ENCODE measurements at regions of chr17 and their contacts with region 1.

Region 1: GRCh38 chr17:51260125-51260880 is at the start of gene UTP18:
- DNase-seq: peak; percentile 97
- H3K4me3 Mint-ChIP-seq: peak within 1 kb of the TSS; percentile 83
- H3K27ac Mint-ChIP-seq: peak within 1 kb of the TSS; percentile 98
- H3K4me1 Mint-ChIP-seq: peaks cover 63% of the 10 kb centered on the region
- H3K27me3 Mint-ChIP-seq: no peaks in the 10 kb centered on the region
- total RNA-seq, gene UTP18: 65.5 to 68.5 TPM

Region 2: GRCh38 chr17:51120739-51121617 is 139.3 kb before region 1 on chr17 and contains the start of gene SPAG9:
- CTCF ChIA-PET with region 1: no interaction called
- POLR2A ChIA-PET with region 1: no interaction called
- intact Hi-C with region 1: loop called (anchors 1 kb)
- DNase-seq: peak; percentile 94
- H3K4me3 Mint-ChIP-seq: peak within 1 kb of the TSS; percentile 94
- H3K27ac Mint-ChIP-seq: peak within 1 kb of the TSS; percentile 98
- H3K4me1 Mint-ChIP-seq: peaks cover 43% of the 10 kb centered on the region
- H3K27me3 Mint-ChIP-seq: no peaks in the 10 kb centered on the region
- total RNA-seq, gene SPAG9: 58.0 to 58.7 TPM

Region 3: GRCh38 chr17:51166197-51166986 is 93.9 kb before region 1 on chr17 and contains the start of gene NME2:
- CTCF ChIA-PET with region 1: interaction called, 4 read pairs
- POLR2A ChIA-PET with region 1: interaction called, 4 read pairs
- intact Hi-C with region 1: loop called (anchors 2 kb)
- DNase-seq: peak; percentile 77
- H3K4me3 Mint-ChIP-seq: peak within 1 kb of the TSS; percentile 82
- H3K27ac Mint-ChIP-seq: peak within 1 kb of the TSS; percentile 89
- H3K4me1 Mint-ChIP-seq: peaks cover 29% of the 10 kb centered on the region
- H3K27me3 Mint-ChIP-seq: no peaks in the 10 kb centered on the region
- total RNA-seq, gene NME2: 790 to 814 TPM

Region 4: DNA sequence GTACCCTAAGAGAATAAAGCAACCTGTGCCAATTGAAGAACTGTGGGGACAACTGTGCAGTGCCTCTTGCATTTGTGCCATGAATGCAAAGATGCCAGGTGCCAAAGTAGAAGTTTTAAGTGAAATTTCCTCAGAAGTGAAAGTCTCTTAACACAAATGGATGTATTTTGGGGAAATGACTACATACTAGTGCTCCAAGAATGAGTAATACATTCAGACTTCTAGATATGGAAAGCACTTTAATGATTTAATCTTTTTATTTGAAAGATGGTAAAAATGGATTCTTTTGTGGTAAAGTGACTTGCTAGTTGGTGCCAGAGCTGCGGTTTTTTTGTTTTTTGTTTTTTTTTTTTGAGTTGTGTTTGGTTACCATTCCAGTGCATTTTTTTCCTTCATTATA is 15.1 kb after region 1 on chr17:
- CTCF ChIA-PET with region 1: interaction called, 3 read pairs
- POLR2A ChIA-PET with region 1: interaction called, 3 read pairs
- intact Hi-C with region 1: loop called (anchors 2 kb)
- DNase-seq: no peak
- H3K4me3 Mint-ChIP-seq: no peak overlapping the region
- H3K27ac Mint-ChIP-seq: no peak overlapping the region
- H3K4me1 Mint-ChIP-seq: peaks cover 34% of the 10 kb centered on the region
- H3K27me3 Mint-ChIP-seq: no peaks in the 10 kb centered on the region

Region 5: DNA sequence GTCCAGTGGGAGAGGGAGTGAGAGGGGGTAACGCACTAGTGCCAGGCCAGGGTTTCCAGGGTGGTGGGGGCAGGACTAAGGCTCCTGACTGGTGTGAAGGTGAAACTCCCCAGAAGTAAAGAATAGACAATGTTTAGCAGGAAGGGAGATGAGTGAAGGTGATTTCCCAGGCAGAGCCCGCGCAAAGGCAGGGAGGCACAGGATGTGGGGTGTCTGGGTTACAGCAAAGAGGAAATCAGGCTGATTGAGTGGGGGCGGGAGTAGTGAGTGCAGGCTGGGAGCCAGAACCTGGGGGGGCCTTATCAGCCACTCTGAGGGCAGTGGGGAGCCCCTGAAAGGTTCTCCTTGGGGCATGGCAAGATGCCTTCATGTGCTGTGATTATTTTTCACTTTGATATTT is 167.6 kb after region 1 on chr17:
- CTCF ChIA-PET with region 1: no interaction called
- POLR2A ChIA-PET with region 1: no interaction called
- intact Hi-C with region 1: loop called (anchors 1 kb)
- DNase-seq: peak; percentile 88
- H3K4me3 Mint-ChIP-seq: peak overlapping the region; percentile 35
- H3K27ac Mint-ChIP-seq: peak overlapping the region; percentile 91
- H3K4me1 Mint-ChIP-seq: peaks cover 51% of the 10 kb centered on the region
- H3K27me3 Mint-ChIP-seq: no peaks in the 10 kb centered on the region